Activated CD8-positive, alpha-beta T cell treated with anti-CD3 and anti-CD28 coated beads for 36 hours (primary cell): ENCODE measurements at regions of chr17 and their contacts with region 1.

Region 1: DNA sequence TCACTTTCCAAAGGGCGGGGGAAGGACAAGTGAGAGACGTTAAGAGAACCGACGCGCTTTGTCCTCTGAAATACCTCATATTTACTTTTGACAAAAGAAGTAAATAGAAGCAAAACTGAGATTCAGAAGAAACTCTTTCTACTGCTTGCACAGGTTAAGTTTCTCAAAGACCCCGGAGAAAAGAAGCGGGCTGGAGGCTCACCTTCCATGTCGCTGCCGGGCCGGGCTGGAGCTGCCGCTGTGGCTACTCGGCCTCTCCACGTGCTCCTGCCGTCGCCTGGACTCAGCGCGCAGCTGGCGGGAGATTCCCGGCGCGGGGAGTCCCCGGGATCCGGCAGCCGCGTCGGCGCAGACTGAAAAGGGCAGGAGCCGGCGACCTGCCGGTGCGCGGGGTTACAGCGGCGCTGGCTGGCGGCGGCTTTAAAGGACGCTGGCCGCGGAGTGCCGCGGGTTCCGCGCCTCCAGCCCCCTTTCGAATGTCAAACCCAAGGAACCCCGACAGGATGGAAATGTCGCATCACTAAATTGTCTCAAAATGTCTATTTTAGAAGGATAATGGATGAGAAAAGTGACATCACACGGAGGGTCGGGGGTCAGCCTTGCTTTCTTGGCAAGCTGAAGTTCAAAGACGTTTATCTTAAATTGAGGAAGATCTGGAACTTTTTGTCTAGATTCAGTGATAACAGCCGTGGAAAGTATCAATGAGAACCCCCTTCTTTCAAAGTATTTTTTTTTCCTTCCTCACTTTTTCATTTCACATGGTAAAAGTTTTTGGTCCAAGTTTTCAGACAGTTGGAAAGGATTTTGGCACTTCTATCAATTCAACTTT is at the start of gene IKZF3:
- DNase-seq: peak; percentile 90
- ATAC-seq: peak; percentile 60
- H3K4me3 Mint-ChIP-seq: peak within 1 kb of the TSS; percentile 85
- H3K27ac Mint-ChIP-seq: peak within 1 kb of the TSS; percentile 90
- H3K4me1 Mint-ChIP-seq: peaks cover 48% of the 10 kb centered on the region
- H3K27me3 Mint-ChIP-seq: no peaks in the 10 kb centered on the region
- CTCF ChIP-seq: no peak
- total RNA-seq, gene IKZF3: 52.1 to 52.2 TPM

Region 2: GRCh38 chr17:39636927-39637736 is 227.0 kb before region 1 on chr17 and contains the start of gene STARD3:
- CTCF ChIA-PET with region 1: no interaction called
- POLR2A ChIA-PET with region 1: no interaction called
- intact Hi-C with region 1: loop called (anchors 10 kb)
- DNase-seq: peak; percentile 95
- ATAC-seq: peak; percentile 93
- H3K4me3 Mint-ChIP-seq: peak within 1 kb of the TSS; percentile 90
- H3K27ac Mint-ChIP-seq: peak within 1 kb of the TSS; percentile 87
- H3K4me1 Mint-ChIP-seq: peaks cover 46% of the 10 kb centered on the region
- H3K27me3 Mint-ChIP-seq: no peaks in the 10 kb centered on the region
- CTCF ChIP-seq: no peak
- total RNA-seq, gene STARD3: 48.7 to 50.3 TPM

Region 3: DNA sequence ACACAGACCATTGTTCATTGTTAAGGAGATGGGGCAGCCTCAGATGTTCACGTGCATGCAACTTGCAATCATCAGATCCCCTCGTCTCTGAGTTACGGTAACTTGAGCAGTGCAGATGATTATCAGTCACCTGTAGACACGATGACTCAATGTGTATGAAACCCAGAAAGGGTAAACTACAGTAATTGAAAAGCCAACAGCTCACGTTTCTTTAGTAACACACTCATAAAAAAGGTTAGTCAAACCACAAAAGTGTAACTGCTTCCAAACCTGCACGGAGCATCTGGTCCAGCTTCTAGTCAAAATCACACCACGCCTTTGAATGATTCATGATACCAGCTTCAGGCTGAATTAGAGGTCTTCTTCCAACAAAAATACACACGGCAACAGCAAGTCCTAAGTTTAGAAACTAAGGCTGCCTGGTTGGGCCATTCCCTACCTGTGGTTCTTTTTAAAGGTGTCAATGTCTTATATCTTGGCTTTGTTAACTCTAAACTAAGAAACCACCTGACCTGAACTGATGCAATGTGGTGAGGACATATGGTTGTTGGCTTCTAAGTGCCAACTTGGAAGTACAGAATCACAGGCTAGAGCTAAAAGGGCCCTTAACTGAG is 94.1 kb before region 1 on chr17:
- CTCF ChIA-PET with region 1: interaction called, 3 read pairs
- POLR2A ChIA-PET with region 1: interaction called, 6 read pairs
- intact Hi-C with region 1: loop called (anchors 5 kb)
- DNase-seq: peak; percentile 84
- ATAC-seq: peak; percentile 81
- H3K4me3 Mint-ChIP-seq: peak overlapping the region; percentile 18
- H3K27ac Mint-ChIP-seq: peak overlapping the region; percentile 90
- H3K4me1 Mint-ChIP-seq: peaks cover 95% of the 10 kb centered on the region
- H3K27me3 Mint-ChIP-seq: no peaks in the 10 kb centered on the region
- CTCF ChIP-seq: no peak

Region 4: DNA sequence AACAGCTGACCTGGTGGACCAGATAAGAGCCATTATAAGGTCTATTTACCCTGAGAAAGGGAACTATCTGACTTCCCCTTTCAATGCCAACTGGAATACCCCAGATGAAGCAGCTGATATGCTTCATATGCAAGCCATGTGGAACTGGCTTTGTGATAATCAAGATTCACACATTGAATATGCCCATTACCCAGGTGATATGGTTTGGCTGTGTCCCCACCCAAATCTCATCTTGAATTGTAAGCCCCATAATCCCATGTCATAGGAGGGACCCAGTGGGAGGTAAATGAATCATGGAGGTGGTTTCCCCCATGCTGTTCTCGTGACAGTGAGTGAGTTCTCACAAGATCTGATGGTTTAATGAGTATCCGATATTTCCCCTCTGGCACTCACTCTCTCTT is 42.1 kb before region 1 on chr17:
- CTCF ChIA-PET with region 1: interaction called, 12 read pairs
- POLR2A ChIA-PET with region 1: interaction called, 9 read pairs
- intact Hi-C with region 1: loop called (anchors 2 kb)
- DNase-seq: peak; percentile 53
- ATAC-seq: peak; percentile 31
- H3K4me3 Mint-ChIP-seq: no peak overlapping the region
- H3K27ac Mint-ChIP-seq: peak overlapping the region; percentile 69
- H3K4me1 Mint-ChIP-seq: peaks cover 57% of the 10 kb centered on the region
- H3K27me3 Mint-ChIP-seq: no peaks in the 10 kb centered on the region
- CTCF ChIP-seq: no peak

Region 5: GRCh38 chr17:39852239-39852638 is 11.9 kb before region 1 on chr17:
- CTCF ChIA-PET with region 1: interaction called, 5 read pairs
- POLR2A ChIA-PET with region 1: interaction called, 19 read pairs
- intact Hi-C with region 1: no loop called
- DNase-seq: no peak
- ATAC-seq: peak; percentile 66
- H3K4me3 Mint-ChIP-seq: peak overlapping the region; percentile 41
- H3K27ac Mint-ChIP-seq: peak overlapping the region; percentile 83
- H3K4me1 Mint-ChIP-seq: peaks cover 56% of the 10 kb centered on the region
- H3K27me3 Mint-ChIP-seq: no peaks in the 10 kb centered on the region
- CTCF ChIP-seq: no peak

Region 6: DNA sequence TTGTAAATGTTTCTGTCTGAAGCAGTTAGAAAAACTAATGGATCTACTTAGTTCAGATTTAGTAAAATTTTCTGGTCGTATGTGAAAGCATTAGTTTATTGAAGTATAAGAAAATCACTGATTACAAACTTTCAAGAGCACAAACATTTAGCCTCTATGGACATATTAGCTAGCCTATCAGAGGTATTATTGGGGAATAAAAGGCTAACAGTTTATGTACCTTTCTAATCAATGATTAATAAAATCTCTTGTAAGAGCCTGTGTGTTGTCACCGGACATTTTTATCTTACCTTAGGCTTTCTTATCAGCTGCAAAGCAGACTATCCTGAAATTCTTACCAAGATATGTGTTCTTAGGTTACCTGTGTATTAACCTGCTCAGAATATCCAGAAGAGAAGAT is 25.1 kb after region 1 on chr17:
- CTCF ChIA-PET with region 1: no interaction called
- POLR2A ChIA-PET with region 1: no interaction called
- intact Hi-C with region 1: no loop called
- DNase-seq: no peak
- ATAC-seq: no peak
- H3K4me3 Mint-ChIP-seq: no peak overlapping the region
- H3K27ac Mint-ChIP-seq: no peak overlapping the region
- H3K4me1 Mint-ChIP-seq: no peaks in the 10 kb centered on the region
- H3K27me3 Mint-ChIP-seq: peaks cover 5% of the 10 kb centered on the region
- CTCF ChIP-seq: no peak

Region 7: DNA sequence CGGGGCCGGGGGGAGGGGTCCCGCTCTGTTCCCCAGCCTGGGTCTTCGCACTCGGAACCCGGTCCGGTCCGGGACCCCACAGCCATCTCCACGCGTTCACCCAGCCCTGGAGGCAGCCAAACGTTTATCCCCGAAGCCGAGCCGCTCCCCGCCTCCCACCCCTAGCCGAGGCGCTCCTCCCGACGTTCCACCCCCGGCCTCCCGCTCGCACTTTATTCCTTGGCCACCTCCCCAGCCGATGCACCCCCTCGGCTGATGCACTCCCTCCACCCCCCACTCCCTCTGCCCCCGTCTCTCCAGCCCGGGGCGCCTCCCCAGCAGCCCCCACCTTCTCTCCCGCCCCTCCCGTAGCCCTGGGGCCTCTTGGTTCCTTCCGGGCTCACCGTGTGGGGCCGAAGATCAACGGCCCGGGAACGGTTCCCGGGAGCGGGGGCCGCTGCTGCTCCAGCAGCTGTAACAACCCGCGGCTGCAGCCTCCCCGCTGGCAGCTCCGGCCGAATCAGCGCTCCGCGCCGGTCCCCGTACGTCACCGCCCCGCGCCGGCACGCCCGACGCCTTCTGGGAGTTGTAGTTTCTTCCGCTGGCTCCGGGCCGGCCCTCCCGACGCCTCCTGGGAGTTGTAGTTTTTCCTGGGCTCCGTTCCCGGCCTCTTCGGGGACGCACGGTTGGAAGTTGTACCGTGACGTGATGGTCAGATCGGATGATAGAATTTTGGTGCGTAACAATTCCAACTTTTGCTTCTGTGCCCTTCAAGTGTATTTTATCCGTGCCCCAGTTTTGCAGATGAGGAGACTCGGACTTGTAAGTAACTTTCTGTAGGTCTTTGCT is 63.2 kb after region 1 on chr17 and contains the starts of genes LRRC3C and ORMDL3:
- CTCF ChIA-PET with region 1: interaction called, 6 read pairs
- POLR2A ChIA-PET with region 1: interaction called, 5 read pairs
- intact Hi-C with region 1: loop called (anchors 5 kb)
- DNase-seq: peak; percentile 93
- ATAC-seq: peak; percentile 74
- H3K4me3 Mint-ChIP-seq: peak within 1 kb of the TSS; percentile 94
- H3K27ac Mint-ChIP-seq: peak within 1 kb of the TSS; percentile 87
- H3K4me1 Mint-ChIP-seq: peaks cover 52% of the 10 kb centered on the region
- H3K27me3 Mint-ChIP-seq: no peaks in the 10 kb centered on the region
- CTCF ChIP-seq: no peak
- total RNA-seq, gene LRRC3C: not detected
- total RNA-seq, gene ORMDL3: 78.8 to 80.5 TPM